Activated T-helper 1 cell treated with anti-CD3 and anti-CD28 coated beads, Interleukin-12 subunit alpha, Interleukin-12 subunit beta, Interleukin-2, Interleukin-4 antibody, amounts not matched to agents 30 ng/mL and 10 ng/mL and 1 ng/mL, durations not matched to agents 14 hours and 24 hours and 36 hours (primary cell): ENCODE measurements at regions of chr1 and their contacts with region 1.

Region 1: GRCh38 chr1:204842892-204843291 is 27.8 kb upstream of the NFASC start:
- DNase-seq: no peak
- H3K4me3 Mint-ChIP-seq: no peak overlapping the region
- H3K27ac Mint-ChIP-seq: no peak overlapping the region
- H3K4me1 Mint-ChIP-seq: no peaks in the 10 kb centered on the region
- H3K27me3 Mint-ChIP-seq: peaks cover 16% of the 10 kb centered on the region

Region 2: GRCh38 chr1:204858363-204858821 is 15.5 kb after region 1 on chr1:
- intact Hi-C with region 1: loop called (anchors 1 kb)
- DNase-seq: no peak
- H3K4me3 Mint-ChIP-seq: no peak overlapping the region
- H3K27ac Mint-ChIP-seq: no peak overlapping the region
- H3K4me1 Mint-ChIP-seq: no peaks in the 10 kb centered on the region
- H3K27me3 Mint-ChIP-seq: peaks cover 9% of the 10 kb centered on the region

Region 3: DNA sequence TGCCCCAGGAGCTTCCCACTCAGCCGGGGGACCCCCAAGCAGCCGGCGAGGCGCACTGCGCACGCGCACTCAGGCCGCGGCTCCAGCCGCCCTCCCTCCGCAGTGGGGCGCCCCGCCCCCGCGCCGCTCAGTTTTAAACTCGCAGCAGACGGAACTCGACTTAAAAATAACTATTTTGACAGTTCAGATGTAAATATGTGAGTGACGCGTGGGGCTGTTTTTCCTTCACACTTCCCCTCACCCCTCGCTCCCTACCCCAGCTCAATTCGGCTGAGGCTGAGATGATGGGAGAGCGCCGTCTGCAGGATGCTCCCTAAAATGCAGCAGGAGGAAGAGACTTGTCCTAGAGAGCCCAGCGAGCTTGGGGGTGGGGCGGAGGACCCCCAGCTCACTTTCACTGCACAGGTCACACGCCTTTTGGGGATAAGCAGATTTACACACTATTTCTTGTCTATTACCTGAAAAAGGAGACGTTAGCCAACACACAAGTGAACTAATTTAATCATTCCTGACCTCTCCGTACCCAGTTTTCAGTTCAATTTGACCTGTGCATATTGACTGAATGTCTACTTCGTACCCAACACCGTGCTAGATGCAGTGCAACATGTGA is 587.9 kb after region 1 on chr1:
- intact Hi-C with region 1: no loop called
- DNase-seq: peak; percentile 27
- H3K4me3 Mint-ChIP-seq: peak overlapping the region; percentile 84
- H3K27ac Mint-ChIP-seq: no peak overlapping the region
- H3K4me1 Mint-ChIP-seq: peaks cover 16% of the 10 kb centered on the region
- H3K27me3 Mint-ChIP-seq: peaks cover 38% of the 10 kb centered on the region